Sciatic nerve (tissue), 2 donors: ENCODE measurements at regions of chr5 and their contacts with region 1.

Region 1: DNA sequence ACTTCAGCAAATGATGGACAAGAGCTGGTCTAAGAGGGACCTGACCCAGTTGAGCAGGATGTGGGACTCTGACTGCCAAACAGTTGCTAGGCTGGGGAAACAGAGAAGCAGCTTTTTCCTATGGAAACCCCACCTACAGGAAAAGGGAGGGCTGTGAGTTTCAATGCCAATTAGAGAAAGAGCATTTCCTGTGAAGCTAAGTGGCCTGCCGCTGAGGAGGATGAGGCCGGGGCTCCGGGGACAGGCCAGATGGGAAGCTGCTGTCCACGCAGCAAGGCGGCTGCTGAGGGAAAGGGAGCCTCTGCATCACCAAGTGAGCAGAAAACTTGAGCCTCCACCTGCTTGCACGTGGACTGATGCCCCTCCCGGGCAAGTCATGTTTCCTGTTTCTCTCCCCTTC is at the start of gene PCDH12:
- DNase-seq: no peak
- ATAC-seq: peak; percentile 37
- total RNA-seq, gene PCDH12: 7.0 TPM

Region 2: DNA sequence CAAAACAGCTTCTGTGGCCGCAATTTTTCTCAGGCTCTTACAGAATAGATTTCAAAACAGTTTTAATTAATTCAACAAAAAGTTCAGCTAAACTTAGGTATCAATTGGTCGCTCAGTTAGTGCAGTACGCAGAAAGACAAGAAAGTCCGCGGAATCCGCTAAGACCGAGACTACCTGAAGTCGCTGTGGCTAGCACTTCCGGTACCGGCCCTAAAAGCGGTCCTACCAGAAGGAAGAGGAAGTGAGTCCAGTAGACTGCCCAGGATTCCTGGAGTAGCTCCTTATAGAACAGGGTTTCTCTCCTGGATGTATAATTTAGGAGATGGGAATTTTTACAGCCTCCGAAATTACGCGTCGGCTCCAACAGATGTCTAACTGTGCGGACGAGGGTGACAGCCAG is 880.3 kb before region 1 on chr5:
- intact Hi-C with region 1: loop called (anchors 5 kb)
- DNase-seq: no peak
- ATAC-seq: no peak

Region 3: GRCh38 chr5:141172378-141173204 is 785.5 kb before region 1 on chr5 and contains the start of gene PCDHB7:
- intact Hi-C with region 1: no loop called
- DNase-seq: no peak
- ATAC-seq: no peak
- total RNA-seq, gene PCDHB7: 5.0 TPM

Region 4: DNA sequence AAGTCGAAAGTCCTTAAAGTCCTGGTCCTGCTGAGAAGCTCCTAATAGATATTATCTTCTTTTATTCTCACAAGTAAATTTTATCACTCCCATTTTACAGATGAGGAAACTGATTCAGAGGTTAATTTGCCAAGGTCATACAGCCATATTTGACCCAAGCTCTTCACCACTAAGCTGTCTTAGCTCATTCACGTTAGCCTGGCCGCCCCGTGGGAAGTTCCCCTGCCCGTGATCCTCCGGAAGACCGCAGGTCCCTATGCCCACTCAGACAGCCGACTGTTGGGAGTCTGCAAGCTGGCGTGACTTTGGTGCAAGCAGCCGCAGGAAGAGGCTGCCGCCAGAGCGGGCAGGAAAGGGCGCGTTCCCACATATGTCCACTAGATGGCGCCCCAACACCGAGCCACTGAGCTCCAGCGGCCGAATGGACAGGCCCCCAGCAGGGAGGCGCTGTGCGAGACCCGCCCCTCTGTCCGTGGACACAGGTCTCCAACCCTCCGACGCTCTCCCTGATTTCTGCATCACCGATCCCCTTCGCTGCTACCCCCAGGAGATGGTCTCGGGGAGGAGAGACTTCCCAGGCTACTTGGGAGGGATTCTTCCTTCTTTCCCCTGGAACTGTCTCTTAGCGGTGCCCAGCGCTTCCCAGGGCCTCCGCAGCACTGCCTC is 266.1 kb before region 1 on chr5:
- intact Hi-C with region 1: loop called (anchors 5 kb)
- DNase-seq: peak; percentile 92
- ATAC-seq: peak; percentile 94

Region 5: DNA sequence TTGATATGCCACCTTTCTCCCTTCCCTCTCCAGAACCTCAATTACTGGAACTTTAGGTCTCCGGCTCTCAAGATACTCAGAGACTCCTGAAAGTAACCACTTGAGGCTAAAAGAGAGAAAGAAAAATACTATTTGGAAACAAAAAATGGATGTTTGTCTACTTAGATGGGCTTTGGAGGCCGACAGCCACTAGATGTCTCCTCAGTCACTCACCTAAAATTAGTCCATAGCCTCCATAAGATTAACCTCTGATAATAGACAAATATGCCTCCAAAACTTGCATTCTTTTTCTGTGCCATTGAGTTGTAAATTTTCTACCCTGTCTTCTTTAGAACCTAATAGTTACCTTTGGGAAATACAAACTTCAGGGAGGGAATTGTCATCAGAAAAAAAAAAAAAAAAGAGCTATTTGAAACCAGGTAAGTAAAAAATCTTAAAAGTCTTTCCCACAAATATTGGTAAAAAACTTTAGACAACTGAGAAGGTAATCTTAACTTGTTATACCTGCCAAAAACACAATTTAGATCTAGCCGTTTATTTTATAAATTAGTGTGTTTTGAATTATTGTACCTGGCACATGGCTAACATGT is 68.7 kb before region 1 on chr5:
- intact Hi-C with region 1: no loop called
- DNase-seq: no peak
- ATAC-seq: no peak